ENCODE measurements at regions of chr11 and their contacts with region 1.

Region 1: GRCh38 chr11:269146-269890 is 8.9 kb upstream of the NLRP6 start:
- DNase-seq: peak; percentile 99
- ATAC-seq: peak; percentile 80
- H3K4me3 ChIP-seq: peak overlapping the region; percentile 78
- H3K27ac ChIP-seq: peak overlapping the region; percentile 88
- H3K4me1 ChIP-seq: peaks cover 14% of the 10 kb centered on the region
- H3K27me3 ChIP-seq: no peaks in the 10 kb centered on the region
- CTCF ChIP-seq: no peak
- EP300 ChIP-seq: peak; percentile 98 to 99
- POLR2A ChIP-seq: no peak; the same call in 1 of the 2 replicates
- RAD21 ChIP-seq: no peak

Region 2: GRCh38 chr11:236774-237767 is 32.2 kb before region 1 on chr11 and contains the start of gene PSMD13:
- CTCF ChIA-PET with region 1: interaction called, 4 read pairs
- POLR2A ChIA-PET with region 1: interaction called, 3 read pairs
- RAD21 ChIA-PET with region 1: interaction called, 3 read pairs
- SMC1A ChIA-PET with region 1: interaction called, 3 read pairs
- in situ Hi-C with region 1: no loop called
- intact Hi-C with region 1: loop called (anchors 2 kb)
- DNase-seq: no peak
- ATAC-seq: peak; percentile 95
- H3K4me3 ChIP-seq: peak within 1 kb of the TSS; percentile 80
- H3K27ac ChIP-seq: peak within 1 kb of the TSS; percentile 86
- H3K4me1 ChIP-seq: no peaks in the 10 kb centered on the region
- H3K27me3 ChIP-seq: no peaks in the 10 kb centered on the region
- CTCF ChIP-seq: no peak
- EP300 ChIP-seq: no peak
- POLR2A ChIP-seq: peak; percentile 81
- RAD21 ChIP-seq: no peak
- polyA plus RNA-seq, gene PSMD13: 198 to 221 TPM

Region 3: GRCh38 chr11:288328-289144 is 19.2 kb after region 1 on chr11 and contains the start of gene PGGHG:
- CTCF ChIA-PET with region 1: interaction called, 3 read pairs
- POLR2A ChIA-PET with region 1: interaction called, 10 read pairs
- RAD21 ChIA-PET with region 1: interaction called, 3 read pairs
- SMC1A ChIA-PET with region 1: interaction called, 4 read pairs
- in situ Hi-C with region 1: no loop called
- intact Hi-C with region 1: no loop called
- DNase-seq: no peak
- ATAC-seq: peak; percentile 89
- H3K4me3 ChIP-seq: peak within 1 kb of the TSS; percentile 81
- H3K27ac ChIP-seq: no peak within 1 kb of the TSS
- H3K4me1 ChIP-seq: peaks cover 8% of the 10 kb centered on the region; the same call in 1 of the 2 replicates
- H3K27me3 ChIP-seq: peaks cover 1 to 2% of the 10 kb centered on the region in 2 experiments; a peak in 3 of 4 replicates
- CTCF ChIP-seq: no peak
- EP300 ChIP-seq: no peak
- POLR2A ChIP-seq: no peak
- RAD21 ChIP-seq: no peak
- polyA plus RNA-seq, gene PGGHG: 0.10 to 0.27 TPM

Region 4: DNA sequence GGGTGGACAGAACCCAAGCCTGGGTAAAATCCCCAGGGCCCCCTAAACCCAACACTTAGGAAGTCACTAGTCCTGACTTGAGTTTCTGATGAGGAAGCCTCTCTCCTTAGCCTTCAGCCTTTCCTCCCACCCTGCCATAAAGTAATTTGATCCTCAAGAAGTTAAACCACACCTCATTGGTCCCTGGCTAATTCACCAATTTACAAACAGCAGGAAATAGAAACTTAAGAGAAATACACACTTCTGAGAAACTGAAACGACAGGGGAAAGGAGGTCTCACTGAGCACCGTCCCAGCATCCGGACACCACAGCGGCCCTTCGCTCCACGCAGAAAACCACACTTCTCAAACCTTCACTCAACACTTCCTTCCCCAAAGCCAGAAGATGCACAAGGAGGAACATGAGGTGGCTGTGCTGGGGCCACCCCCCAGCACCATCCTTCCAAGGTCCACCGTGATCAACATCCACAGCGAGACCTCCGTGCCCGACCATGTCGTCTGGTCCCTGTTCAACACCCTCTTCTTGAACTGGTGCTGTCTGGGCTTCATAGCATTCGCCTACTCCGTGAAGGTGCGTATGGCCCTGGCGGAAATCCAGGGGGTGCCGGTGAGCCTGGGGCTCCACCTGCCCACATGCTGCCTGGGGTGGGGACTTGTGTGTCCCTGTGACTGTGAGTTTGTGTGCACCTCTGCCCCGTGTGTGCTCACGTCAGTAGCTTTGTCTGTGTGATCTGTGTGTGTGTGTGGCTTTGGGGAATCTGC is 44.6 kb after region 1 on chr11 and contains the start of gene IFITM1:
- CTCF ChIA-PET with region 1: interaction called, 6 read pairs
- POLR2A ChIA-PET with region 1: interaction called, 15 read pairs
- RAD21 ChIA-PET with region 1: interaction called, 8 read pairs
- SMC1A ChIA-PET with region 1: interaction called, 6 read pairs
- in situ Hi-C with region 1: no loop called
- intact Hi-C with region 1: loop called (anchors 2 kb)
- DNase-seq: peak; percentile 92
- ATAC-seq: peak; percentile 47
- H3K4me3 ChIP-seq: peak within 1 kb of the TSS; percentile 87
- H3K27ac ChIP-seq: peak within 1 kb of the TSS; percentile 98
- H3K4me1 ChIP-seq: peaks cover 11% of the 10 kb centered on the region
- H3K27me3 ChIP-seq: no peaks in the 10 kb centered on the region; a peak in 1 of 4 replicates
- CTCF ChIP-seq: no peak
- EP300 ChIP-seq: no peak
- POLR2A ChIP-seq: peak; percentile 88
- RAD21 ChIP-seq: no peak
- polyA plus RNA-seq, gene IFITM1: 1,771 to 2,788 TPM

Region 5: GRCh38 chr11:334264-334994 is 65.1 kb after region 1 on chr11:
- CTCF ChIA-PET with region 1: no interaction called
- POLR2A ChIA-PET with region 1: interaction called, 11 read pairs
- RAD21 ChIA-PET with region 1: interaction called, 3 read pairs
- SMC1A ChIA-PET with region 1: interaction called, 3 read pairs
- in situ Hi-C with region 1: no loop called
- intact Hi-C with region 1: no loop called
- DNase-seq: no peak
- ATAC-seq: no peak
- H3K4me3 ChIP-seq: no peak overlapping the region
- H3K27ac ChIP-seq: no peak overlapping the region
- H3K4me1 ChIP-seq: peaks cover 25% of the 10 kb centered on the region
- H3K27me3 ChIP-seq: no peaks in the 10 kb centered on the region
- CTCF ChIP-seq: no peak
- EP300 ChIP-seq: no peak
- POLR2A ChIP-seq: no peak
- RAD21 ChIP-seq: no peak

Measured in GM12878 (cell line).